HEK293 (cell line): ENCODE measurements at regions of chr16 and their contacts with region 1.

Region 1: GRCh38 chr16:84062734-84063640 is 20.4 kb upstream of the SLC38A8 start:
- H3K4me3 ChIP-seq: no peak overlapping the region
- H3K27ac ChIP-seq: no peak overlapping the region
- H3K4me1 ChIP-seq: no peaks in the 10 kb centered on the region
- CTCF ChIP-seq: peak; percentile 63

Region 2: DNA sequence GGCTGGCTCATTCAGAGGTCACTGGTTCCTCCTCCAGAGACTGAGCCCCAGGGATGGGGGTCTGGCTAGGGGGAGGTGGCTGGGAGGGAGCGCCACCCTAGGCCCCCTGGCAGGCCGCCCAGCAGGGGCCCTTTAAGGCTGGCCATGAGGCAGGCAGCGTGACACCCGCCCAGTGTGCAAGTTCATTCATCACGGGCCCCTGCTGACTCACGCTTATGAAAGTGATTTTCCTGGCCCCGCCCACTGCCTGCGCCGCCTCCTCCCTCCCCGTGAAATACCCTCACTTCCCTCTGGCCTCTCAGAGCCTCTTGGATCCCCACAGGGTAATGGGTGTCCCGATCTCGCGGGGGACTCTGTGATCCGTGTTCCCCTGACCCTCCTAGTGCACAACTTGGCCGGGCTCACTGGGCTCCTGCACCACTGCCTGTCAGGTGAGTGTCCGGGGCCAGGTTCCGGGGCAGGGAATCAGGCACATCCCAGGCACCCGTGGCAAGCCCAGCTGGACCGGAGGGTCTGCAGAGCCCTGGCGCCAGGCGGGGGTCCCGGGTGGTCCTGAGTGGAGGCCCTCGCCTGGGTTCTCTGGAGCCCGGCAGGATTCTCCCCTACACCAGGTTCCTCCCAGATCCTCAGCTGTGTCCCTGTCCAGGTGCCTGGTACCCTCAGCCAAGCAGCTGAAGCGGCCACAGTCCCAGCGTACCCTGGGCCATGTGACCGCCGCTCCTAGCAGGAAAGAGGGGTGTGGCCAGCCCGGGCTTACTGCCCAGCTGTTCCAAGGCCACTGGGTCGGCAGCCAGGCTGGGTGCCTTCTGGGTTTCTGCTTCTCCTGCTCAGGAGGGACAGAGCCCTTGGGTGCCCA is 109.8 kb before region 1 on chr16 and contains the start of gene OSGIN1:
- CTCF ChIA-PET with region 1: interaction called, 174 read pairs
- POLR2A ChIA-PET with region 1: no interaction called
- H3K4me3 ChIP-seq: peak within 1 kb of the TSS; percentile 32
- H3K27ac ChIP-seq: no peak within 1 kb of the TSS
- H3K4me1 ChIP-seq: no peaks in the 10 kb centered on the region; the same call in 1 of the 2 replicates
- CTCF ChIP-seq: no peak

Region 3: DNA sequence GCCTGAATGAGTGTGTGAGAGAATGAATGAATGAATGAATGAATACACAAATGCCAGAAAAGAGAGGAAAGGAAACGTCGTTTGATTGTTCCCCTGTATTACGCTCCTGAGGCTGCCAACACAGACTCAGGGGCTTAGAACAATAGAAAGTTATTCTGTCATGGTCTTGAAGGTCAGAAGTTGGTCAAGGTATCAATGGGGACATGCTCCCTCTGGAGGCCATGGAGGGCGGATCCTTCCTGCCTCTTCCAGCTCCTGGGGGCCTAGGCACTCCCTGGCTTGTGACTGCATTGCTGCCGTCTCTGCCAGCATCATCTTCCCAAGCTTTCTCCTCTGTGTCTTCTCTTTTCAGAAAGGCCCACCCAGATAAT is 18.9 kb before region 1 on chr16:
- CTCF ChIA-PET with region 1: interaction called, 21 read pairs
- POLR2A ChIA-PET with region 1: no interaction called
- H3K4me3 ChIP-seq: no peak overlapping the region
- H3K27ac ChIP-seq: no peak overlapping the region
- H3K4me1 ChIP-seq: peaks cover 7% of the 10 kb centered on the region
- CTCF ChIP-seq: 0 out of 2 replicates have a peak, but pooled peaks have one; percentile 19

Region 4: GRCh38 chr16:84084570-84085270 is 21.7 kb after region 1 on chr16:
- CTCF ChIA-PET with region 1: interaction called, 16 read pairs
- POLR2A ChIA-PET with region 1: no interaction called
- H3K4me3 ChIP-seq: no peak overlapping the region
- H3K27ac ChIP-seq: no peak overlapping the region
- H3K4me1 ChIP-seq: no peaks in the 10 kb centered on the region
- CTCF ChIP-seq: peak; percentile 74